ENCODE measurements at regions of chr1 and their contacts with region 1.

Region 1: DNA sequence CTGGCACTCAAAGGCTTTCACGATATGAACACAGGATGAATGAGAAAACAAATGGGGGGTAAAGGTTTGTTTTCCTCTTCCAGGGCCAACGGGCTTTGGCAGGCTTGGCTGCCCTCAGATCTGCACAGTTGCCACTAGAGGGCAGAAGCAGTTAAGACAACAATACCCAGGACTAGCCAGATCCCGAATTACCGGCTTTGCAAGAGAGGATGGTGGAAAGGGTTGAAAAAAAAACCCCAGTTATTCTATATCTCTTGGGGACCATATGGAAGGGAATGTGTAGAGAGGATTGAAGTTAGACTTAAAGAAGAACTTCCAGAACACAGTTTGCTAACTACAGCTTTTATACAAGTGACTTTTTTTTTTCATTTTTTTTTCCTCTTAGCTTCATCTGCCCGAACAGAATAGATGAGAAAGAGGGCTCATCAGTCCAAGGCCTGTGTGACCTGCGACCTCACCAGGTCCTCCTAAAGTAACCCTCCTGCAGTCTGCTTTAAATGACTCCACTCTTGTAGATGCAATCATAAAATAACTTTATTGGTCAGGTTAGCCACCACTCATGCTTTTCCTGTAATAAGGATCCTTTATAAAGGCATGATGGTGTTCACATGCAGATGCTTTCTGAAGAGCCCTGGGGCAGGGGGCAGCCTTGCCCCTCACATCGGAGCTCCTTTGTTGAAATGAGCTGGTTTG is 10.7 kb downstream of the FMOD start:
- DNase-seq: peak; percentile 22 to 77 (median 50)
- ATAC-seq: peak; percentile 69 to 80
- H3K4me3 Mint-ChIP-seq: peak overlapping the region in 1 of 10 donors; percentile 11
- H3K27ac Mint-ChIP-seq: peak overlapping the region in 7 of 10 donors; percentile 4 to 67 (median 33)
- H3K4me1 Mint-ChIP-seq: peaks cover 22 to 39% (median 34%) of the 10 kb centered on the region in 4 donors
- H3K27me3 Mint-ChIP-seq: peaks cover 0 to 28% (median 6%) of the 10 kb centered on the region in 5 donors

Region 2: GRCh38 chr1:203273206-203273868 is 66.9 kb before region 1 on chr1:
- POLR2A ChIA-PET with region 1: interaction called, 187 read pairs
- DNase-seq: peak; percentile 79 to 95 (median 91)
- ATAC-seq: peak; percentile 65 to 69
- H3K4me3 Mint-ChIP-seq: peak overlapping the region; percentile 70 to 87 (median 78)
- H3K27ac Mint-ChIP-seq: peak overlapping the region; percentile 75 to 94 (median 92)
- H3K4me1 Mint-ChIP-seq: peaks cover 13 to 72% (median 55%) of the 10 kb centered on the region in 4 donors
- H3K27me3 Mint-ChIP-seq: no peaks in the 10 kb centered on the region

Region 3: DNA sequence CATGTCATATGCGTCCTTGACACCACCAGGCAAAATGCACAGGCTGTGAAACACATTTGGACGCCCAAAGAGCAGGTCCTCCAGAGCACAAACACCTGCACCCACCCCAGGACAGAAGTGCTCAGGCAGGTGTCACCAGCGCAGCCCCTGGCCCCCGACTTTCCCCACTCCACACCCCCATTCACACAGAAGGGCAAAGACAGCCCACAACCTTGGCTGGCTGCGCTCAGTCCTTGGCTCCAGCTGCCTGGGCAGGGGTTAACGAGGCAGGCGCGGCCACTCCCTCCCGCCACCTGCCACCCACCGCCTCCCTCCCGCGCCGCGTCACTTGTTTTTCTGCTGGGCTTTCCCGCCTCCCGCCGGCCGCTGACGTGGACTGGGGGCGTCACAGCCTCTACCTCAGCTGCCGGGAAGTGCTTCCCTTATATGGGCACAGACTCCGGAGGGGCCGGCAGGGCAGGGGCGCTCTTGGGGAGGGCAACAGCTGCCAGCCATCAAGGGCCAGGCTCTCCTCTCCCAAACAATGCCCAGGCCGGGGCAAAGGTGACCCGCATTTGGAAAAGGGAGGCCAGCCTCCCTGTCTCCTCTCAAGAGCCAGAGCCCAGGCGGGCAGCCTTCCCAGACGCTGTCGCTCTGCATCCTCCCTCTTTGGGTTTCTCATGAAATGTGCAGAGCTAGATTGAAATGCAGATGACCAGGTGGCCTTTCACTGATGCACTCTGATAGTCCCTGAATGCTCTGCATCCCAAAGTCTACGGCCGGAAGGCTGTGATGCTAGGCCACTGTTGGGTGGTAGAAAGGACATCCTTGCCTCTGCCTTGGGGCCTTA is 49.8 kb before region 1 on chr1:
- POLR2A ChIA-PET with region 1: interaction called, 16 read pairs
- DNase-seq: peak; percentile 91 to 99 (median 97)
- ATAC-seq: peak; percentile 57 to 68
- H3K4me3 Mint-ChIP-seq: peak overlapping the region; percentile 69 to 90 (median 84)
- H3K27ac Mint-ChIP-seq: peak overlapping the region; percentile 97 to 100 (median 99)
- H3K4me1 Mint-ChIP-seq: peaks cover 45 to 91% (median 85%) of the 10 kb centered on the region in 4 donors
- H3K27me3 Mint-ChIP-seq: no peaks in the 10 kb centered on the region

Region 4: DNA sequence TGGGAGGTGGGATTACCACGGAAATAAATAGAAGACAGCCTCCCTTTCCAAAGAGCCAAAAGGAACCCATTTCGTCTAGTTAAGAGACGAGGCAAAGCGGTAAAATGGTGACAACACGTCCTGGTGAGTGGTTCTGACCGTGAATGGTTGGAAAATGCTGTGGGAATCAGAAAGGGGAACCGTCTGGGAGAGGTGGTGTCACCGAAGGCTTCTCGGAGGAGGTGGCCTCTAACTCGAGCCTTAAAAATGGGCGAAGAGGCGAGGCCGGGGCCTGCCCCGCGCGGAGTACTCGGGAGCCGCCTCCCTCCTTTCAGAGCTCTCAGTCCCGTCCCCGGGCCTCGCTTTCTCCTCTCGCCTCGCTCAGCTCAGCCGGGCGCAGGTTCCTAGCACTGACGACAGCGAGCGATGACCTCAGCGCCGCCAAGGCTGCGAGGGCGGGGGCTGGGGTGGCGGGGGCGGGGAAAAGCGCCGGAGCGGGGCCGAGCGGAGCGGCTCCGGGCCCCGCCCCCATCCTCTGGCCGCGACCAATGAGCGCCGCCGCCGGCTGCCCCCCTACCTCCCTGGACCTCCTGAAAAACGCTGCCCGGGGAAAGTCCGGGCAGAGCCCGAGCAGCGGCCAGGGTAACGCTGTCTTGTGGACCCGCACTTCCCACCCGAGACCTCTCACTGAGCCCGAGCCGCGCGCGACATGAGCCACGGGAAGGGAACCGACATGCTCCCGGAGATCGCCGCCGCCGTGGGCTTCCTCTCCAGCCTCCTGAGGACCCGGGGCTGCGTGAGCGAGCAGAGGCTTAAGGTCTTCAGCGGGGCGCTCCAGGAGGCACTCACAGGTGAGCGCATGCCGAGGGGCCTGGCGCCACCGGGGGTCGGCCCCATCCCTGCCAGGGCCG is 35.1 kb before region 1 on chr1 and contains the start of gene BTG2:
- POLR2A ChIA-PET with region 1: interaction called, 76 read pairs
- DNase-seq: peak; percentile 89 to 96 (median 91)
- ATAC-seq: peak; percentile 75 to 82
- H3K4me3 Mint-ChIP-seq: peak within 1 kb of the TSS; percentile 94 to 99 (median 98)
- H3K27ac Mint-ChIP-seq: peak within 1 kb of the TSS; percentile 98 to 100 (median 99)
- H3K4me1 Mint-ChIP-seq: peaks cover 49 to 68% (median 60%) of the 10 kb centered on the region in 4 donors
- H3K27me3 Mint-ChIP-seq: no peaks in the 10 kb centered on the region
- polyA plus RNA-seq, gene BTG2: 91.8 to 179 (median 122) TPM